ENCODE measurements at regions of chr17 and their contacts with region 1.

Region 1: GRCh38 chr17:75393523-75394331 is 11.8 kb downstream of the GRB2 start:
- DNase-seq: peak; percentile 98
- H3K4me3 ChIP-seq: peak overlapping the region; percentile 57 to 85 (median 75)
- H3K27ac ChIP-seq: peak overlapping the region; percentile 20
- H3K4me1 ChIP-seq: peaks cover 29% of the 10 kb centered on the region
- H3K27me3 ChIP-seq: no peaks in the 10 kb centered on the region
- CTCF ChIP-seq: peak in 1 of 2 donors; percentile 17

Region 2: GRCh38 chr17:75313941-75314551 is 79.7 kb before region 1 on chr17:
- CTCF ChIA-PET with region 1: no interaction called
- dilution Hi-C with region 1: no loop called
- in situ Hi-C with region 1: loop called in 1 of 2 experiments (anchors 5 kb)
- intact Hi-C with region 1: no loop called
- DNase-seq: no peak
- H3K4me3 ChIP-seq: no peak overlapping the region
- H3K27ac ChIP-seq: no peak overlapping the region
- H3K4me1 ChIP-seq: no peaks in the 10 kb centered on the region
- H3K27me3 ChIP-seq: no peaks in the 10 kb centered on the region
- CTCF ChIP-seq: no peak

Region 3: GRCh38 chr17:75353176-75353575 is 40.6 kb before region 1 on chr17:
- CTCF ChIA-PET with region 1: no interaction called
- dilution Hi-C with region 1: no loop called
- in situ Hi-C with region 1: no loop called
- intact Hi-C with region 1: no loop called
- DNase-seq: no peak
- H3K4me3 ChIP-seq: no peak overlapping the region
- H3K27ac ChIP-seq: no peak overlapping the region
- H3K4me1 ChIP-seq: peaks cover 12% of the 10 kb centered on the region
- H3K27me3 ChIP-seq: no peaks in the 10 kb centered on the region
- CTCF ChIP-seq: no peak

Region 4: GRCh38 chr17:75364078-75364477 is 29.6 kb before region 1 on chr17:
- CTCF ChIA-PET with region 1: no interaction called
- dilution Hi-C with region 1: no loop called
- in situ Hi-C with region 1: no loop called
- intact Hi-C with region 1: loop called (anchors 5 kb)
- DNase-seq: peak; percentile 74
- H3K4me3 ChIP-seq: no peak overlapping the region
- H3K27ac ChIP-seq: no peak overlapping the region
- H3K4me1 ChIP-seq: peaks cover 15% of the 10 kb centered on the region
- H3K27me3 ChIP-seq: no peaks in the 10 kb centered on the region
- CTCF ChIP-seq: no peak

Measured in mammary epithelial cell (primary cell).